PC-9 (cell line): ENCODE measurements at regions of chr10 and their contacts with region 1.

Region 1: DNA sequence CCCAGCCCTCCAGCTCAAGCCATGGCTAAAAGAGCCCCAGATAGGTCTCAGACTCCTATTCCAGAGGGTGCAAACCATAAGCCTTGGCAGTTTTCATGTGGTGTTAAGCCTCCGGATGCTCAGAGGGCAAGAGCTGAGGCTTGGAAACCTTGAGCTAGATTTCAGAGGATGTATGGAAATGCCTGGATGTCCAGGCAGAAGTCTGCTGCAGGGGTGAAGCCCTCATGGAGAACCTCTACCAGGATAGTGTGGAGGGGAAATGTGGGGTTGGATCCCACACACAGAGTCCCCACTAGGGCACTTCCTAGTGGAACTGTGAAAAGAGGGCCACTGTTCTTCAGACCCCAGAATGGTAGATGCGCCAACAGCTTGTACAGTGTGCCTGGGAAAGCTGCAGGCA is 13.2 kb upstream of the HPSE2 start:
- DNase-seq: no peak
- H3K4me3 ChIP-seq: no peak overlapping the region
- H3K27ac ChIP-seq: no peak overlapping the region
- H3K4me1 ChIP-seq: no peaks in the 10 kb centered on the region
- H3K27me3 ChIP-seq: no peaks in the 10 kb centered on the region
- CTCF ChIP-seq: no peak

Region 2: DNA sequence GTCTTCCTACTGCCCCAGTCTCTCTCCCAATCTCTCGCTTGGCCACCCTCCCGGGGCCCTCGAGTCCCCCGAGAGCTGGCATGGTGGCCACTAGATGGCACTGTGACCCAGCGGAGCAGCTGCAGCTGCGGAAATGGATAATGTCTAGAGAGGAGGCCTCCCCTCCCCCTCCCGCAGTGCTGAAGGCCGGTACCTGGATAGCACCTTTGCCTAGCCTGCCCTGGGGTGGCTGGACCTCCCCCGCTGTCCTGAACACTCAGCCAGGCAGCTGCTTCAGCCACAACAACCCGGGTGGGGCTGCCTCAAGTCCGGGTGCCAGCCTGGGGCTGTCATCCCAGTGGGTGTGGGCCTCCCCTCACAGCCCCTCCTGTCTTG is 1334.0 kb before region 1 on chr10:
- CTCF ChIA-PET with region 1: no interaction called
- POLR2A ChIA-PET with region 1: no interaction called
- intact Hi-C with region 1: loop called (anchors 10 kb)
- DNase-seq: peak; percentile 35 to 63
- H3K4me3 ChIP-seq: no peak overlapping the region
- H3K27ac ChIP-seq: no peak overlapping the region
- H3K4me1 ChIP-seq: no peaks in the 10 kb centered on the region
- H3K27me3 ChIP-seq: peaks cover 10% of the 10 kb centered on the region
- CTCF ChIP-seq: peak; percentile 85

Region 3: DNA sequence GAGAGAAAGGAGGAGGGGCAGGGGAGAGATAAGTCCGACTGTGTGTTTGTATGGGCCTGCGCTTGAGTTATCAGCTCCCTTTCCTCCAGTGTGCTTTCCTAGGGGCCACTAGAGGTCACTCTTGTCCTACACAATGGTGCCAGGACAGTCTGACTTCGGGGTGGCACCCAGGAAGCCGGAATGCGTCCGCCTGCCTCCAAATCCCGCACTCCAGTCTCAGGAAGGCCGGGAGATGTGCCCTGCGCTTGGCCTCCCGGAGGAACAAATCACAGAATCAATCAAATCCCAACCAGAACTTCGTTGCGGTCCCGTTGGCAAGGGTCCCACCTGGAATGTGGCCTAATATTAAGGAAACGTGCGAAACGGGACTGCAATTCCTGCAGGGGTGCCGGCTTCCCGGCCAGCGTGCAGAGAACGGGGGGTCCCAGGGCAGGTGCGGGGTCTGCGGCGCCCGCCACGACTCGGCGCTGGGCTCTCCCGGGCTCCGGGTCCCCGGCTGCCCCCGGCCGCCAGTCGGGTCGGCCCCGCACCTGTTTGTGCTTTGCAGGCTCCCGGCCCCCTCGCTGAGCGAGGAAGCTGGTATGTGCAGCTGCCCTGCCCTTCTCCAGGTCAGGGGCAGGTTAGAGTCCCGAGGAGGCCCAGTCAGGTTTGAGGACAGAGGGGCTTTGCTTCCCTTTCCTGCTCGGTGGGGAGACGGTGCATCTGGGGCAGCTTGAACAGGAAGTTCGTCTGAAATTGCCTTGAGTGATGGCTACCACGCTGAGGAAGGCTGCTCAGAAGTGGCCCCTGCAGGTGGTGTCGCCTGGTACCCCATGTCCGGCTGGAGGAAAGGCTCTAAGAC is 781.1 kb before region 1 on chr10:
- CTCF ChIA-PET with region 1: interaction called, 5 read pairs
- POLR2A ChIA-PET with region 1: no interaction called
- intact Hi-C with region 1: loop called (anchors 1 kb)
- DNase-seq: peak; percentile 52 to 64
- H3K4me3 ChIP-seq: peak overlapping the region; percentile 71
- H3K27ac ChIP-seq: no peak overlapping the region
- H3K4me1 ChIP-seq: no peaks in the 10 kb centered on the region
- H3K27me3 ChIP-seq: no peaks in the 10 kb centered on the region
- CTCF ChIP-seq: peak; percentile 68

Region 4: DNA sequence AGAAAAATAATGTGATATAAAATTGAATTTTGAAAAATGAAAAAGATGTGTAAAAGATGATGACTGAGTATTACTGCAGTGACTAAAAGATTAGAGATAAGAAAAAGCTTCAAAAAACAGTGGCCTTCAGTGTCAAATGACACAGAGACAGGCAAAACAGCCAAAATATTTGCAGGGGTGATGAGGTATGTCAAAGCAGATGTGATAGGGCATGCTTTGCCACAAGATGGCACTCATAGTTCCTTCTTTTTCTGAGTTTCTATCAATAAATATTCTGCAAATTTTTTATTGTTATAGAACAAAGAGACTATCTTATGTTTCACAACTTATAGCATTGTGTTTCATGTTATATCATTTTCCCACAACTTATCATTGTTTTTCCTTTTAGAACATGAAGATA is 458.0 kb before region 1 on chr10:
- CTCF ChIA-PET with region 1: no interaction called
- POLR2A ChIA-PET with region 1: no interaction called
- intact Hi-C with region 1: loop called (anchors 5 kb)
- DNase-seq: no peak
- H3K4me3 ChIP-seq: no peak overlapping the region
- H3K27ac ChIP-seq: no peak overlapping the region
- H3K4me1 ChIP-seq: no peaks in the 10 kb centered on the region
- H3K27me3 ChIP-seq: no peaks in the 10 kb centered on the region
- CTCF ChIP-seq: peak; percentile 37; the same call in 1 of the 2 replicates